ENCODE measurements at regions of chr13 and their contacts with region 1.

Region 1: DNA sequence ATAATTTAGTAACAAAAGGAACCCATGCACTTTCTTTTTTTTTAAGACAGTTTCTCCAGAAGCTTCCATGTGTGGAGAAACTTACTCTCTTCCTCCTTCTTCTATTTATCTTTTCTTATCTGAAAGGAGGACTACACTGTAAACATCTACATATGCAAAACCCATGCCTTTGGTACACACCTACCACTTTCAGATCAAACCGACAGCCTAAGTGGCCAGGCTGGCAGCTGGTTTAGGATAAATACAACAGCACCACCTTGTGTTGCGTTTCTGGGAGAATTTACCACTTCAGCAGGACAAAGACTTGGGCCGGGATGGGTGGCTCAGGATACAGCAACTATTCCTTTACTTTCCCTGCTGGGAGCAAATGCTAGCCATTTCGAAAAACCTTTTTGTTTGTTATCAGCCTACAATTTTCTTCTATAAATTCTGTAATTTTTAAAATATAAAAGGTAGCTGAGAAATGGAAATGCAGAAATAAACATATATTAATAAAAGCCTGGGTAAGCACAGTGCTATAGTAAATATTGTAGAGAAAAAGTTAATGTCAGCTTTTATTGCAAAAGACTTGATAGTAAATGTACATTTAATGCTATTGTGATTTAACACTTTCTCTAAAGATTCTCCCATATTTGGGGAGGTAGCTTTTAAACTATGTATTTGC is 94.0 kb upstream of the RFC3 start:
- DNase-seq: peak; percentile 79 to 93 (median 88)
- H3K4me3 ChIP-seq: no peak overlapping the region
- H3K27ac ChIP-seq: peak overlapping the region in 2 of 5 donors; percentile 52 to 81
- H3K4me1 ChIP-seq: peaks cover 18 to 39% of the 10 kb centered on the region in 2 donors
- H3K27me3 ChIP-seq: no peaks in the 10 kb centered on the region
- CTCF ChIP-seq: peak; percentile 63 to 86 (median 84)
- POLR2A ChIP-seq: no peak

Region 2: GRCh38 chr13:33542283-33543088 is 181.4 kb before region 1 on chr13:
- intact Hi-C with region 1: loop called in 1 of 2 experiments (anchors 10 kb)
- DNase-seq: peak; percentile 98 to 99 (median 99)
- H3K4me3 ChIP-seq: peak overlapping the region in 2 of 4 donors; percentile 17 to 40
- H3K27ac ChIP-seq: peak overlapping the region; percentile 96 to 99 (median 98)
- H3K4me1 ChIP-seq: peaks cover 20 to 28% of the 10 kb centered on the region in 2 donors
- H3K27me3 ChIP-seq: no peaks in the 10 kb centered on the region
- CTCF ChIP-seq: peak; percentile 78 to 98 (median 95)
- POLR2A ChIP-seq: peak; percentile 38 to 77

Region 3: DNA sequence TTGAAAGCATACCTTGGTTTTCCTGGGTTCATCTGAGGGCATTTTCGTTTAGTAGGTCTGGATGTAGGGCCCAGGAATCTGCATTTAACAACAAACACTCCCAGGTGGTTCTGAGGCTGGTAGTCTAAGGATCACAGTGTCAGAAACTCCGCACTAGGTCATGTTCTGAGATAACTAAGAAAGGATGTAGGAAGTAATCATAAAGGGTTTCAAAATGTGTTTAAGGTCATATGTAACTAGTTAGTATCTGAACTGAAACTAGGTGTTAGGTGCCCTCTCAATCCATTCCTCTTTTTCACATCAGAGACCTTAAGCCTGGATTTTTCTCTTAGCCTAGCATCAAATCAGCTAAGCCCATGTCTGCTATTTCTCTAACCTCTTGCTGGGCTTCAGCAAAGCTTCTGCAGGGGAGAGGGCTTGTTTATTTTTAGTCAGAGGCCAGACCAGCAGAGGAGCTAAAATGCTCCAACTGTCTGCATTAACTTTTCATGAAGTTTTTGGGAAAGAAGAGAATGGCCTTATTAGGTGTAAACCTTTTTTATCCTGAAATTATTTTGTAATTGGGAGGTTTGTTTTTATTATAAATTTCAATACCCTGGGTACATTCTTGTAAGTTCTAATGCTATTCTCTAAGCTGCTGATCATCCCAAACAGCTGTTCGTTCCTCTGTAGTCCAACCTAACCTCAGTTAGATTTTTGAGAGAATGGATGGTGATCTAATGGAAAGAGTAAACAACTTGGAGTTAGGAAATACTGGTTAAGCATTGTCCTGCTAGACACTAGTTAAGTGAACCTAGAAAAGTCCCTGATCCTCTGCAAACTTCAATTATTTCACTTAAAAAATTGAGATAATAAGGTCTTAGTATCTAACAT is 168.7 kb before region 1 on chr13:
- intact Hi-C with region 1: loop called in 1 of 2 experiments (anchors 10 kb)
- DNase-seq: no peak
- H3K4me3 ChIP-seq: no peak overlapping the region
- H3K27ac ChIP-seq: no peak overlapping the region
- H3K4me1 ChIP-seq: no peaks in the 10 kb centered on the region
- H3K27me3 ChIP-seq: no peaks in the 10 kb centered on the region
- CTCF ChIP-seq: no peak
- POLR2A ChIP-seq: no peak

Measured in adrenal gland (tissue), 19 donors.